MCF 10A (cell line): ENCODE measurements at regions of chr18 and their contacts with region 1.

Region 1: DNA sequence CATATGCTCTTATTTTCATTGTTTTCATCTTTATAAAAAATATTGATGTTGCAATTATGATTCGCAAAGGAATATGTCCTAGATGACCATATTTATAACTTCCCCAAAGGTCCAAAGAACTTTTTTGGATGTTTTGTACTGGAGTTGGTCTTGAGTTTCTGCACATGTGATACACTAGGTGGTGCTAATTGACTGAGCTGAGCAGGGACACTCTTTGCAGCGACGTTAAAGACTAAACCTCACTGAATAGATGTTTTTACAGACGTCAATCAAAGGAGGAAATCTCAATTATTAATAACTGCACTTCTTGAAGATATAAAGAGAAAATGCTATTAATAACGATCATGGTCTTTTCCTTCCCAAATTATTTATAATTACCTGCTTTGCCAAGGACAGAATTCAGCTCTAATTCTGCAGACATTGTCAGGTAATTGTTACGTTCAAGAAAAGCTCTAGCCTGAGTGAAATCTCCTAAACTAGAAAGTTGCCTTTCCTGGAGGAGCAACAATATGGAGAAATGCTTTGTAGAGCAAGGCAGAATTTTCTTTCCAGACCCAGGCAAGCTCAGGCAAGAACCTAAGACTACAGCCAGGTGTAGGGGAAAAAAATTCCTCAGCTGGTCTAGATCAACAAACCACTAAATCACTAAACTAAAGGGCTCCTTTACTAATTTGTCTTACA is 119.3 kb upstream of the RBBP8 start:
- DNase-seq: peak; percentile 73
- H3K4me3 Mint-ChIP-seq: no peak overlapping the region
- H3K27ac Mint-ChIP-seq: peak overlapping the region; percentile 73
- H3K4me1 Mint-ChIP-seq: peaks cover 21% of the 10 kb centered on the region
- H3K27me3 Mint-ChIP-seq: no peaks in the 10 kb centered on the region
- CTCF ChIP-seq: peak; percentile 71

Region 2: GRCh38 chr18:22831441-22831904 is 17.7 kb after region 1 on chr18:
- CTCF ChIA-PET with region 1: interaction called, 9 read pairs
- POLR2A ChIA-PET with region 1: interaction called, 25 read pairs
- intact Hi-C with region 1: no loop called
- DNase-seq: peak; percentile 97
- H3K4me3 Mint-ChIP-seq: no peak overlapping the region
- H3K27ac Mint-ChIP-seq: no peak overlapping the region
- H3K4me1 Mint-ChIP-seq: peaks cover 30% of the 10 kb centered on the region
- H3K27me3 Mint-ChIP-seq: no peaks in the 10 kb centered on the region
- CTCF ChIP-seq: no peak

Region 3: GRCh38 chr18:22846088-22846683 is 32.4 kb after region 1 on chr18:
- CTCF ChIA-PET with region 1: interaction called, 42 read pairs
- POLR2A ChIA-PET with region 1: interaction called, 22 read pairs
- intact Hi-C with region 1: loop called (anchors 5 kb)
- DNase-seq: peak; percentile 54
- H3K4me3 Mint-ChIP-seq: no peak overlapping the region
- H3K27ac Mint-ChIP-seq: peak overlapping the region; percentile 71
- H3K4me1 Mint-ChIP-seq: peaks cover 62% of the 10 kb centered on the region
- H3K27me3 Mint-ChIP-seq: no peaks in the 10 kb centered on the region
- CTCF ChIP-seq: peak; percentile 29

Region 4: GRCh38 chr18:22933206-22933957 is 119.6 kb after region 1 on chr18 and contains the start of gene RBBP8:
- CTCF ChIA-PET with region 1: interaction called, 25 read pairs
- POLR2A ChIA-PET with region 1: interaction called, 16 read pairs
- intact Hi-C with region 1: loop called (anchors 1 kb)
- DNase-seq: peak; percentile 85
- H3K4me3 Mint-ChIP-seq: peak within 1 kb of the TSS; percentile 95
- H3K27ac Mint-ChIP-seq: peak within 1 kb of the TSS; percentile 76
- H3K4me1 Mint-ChIP-seq: peaks cover 18% of the 10 kb centered on the region
- H3K27me3 Mint-ChIP-seq: no peaks in the 10 kb centered on the region
- CTCF ChIP-seq: no peak
- total RNA-seq, gene RBBP8: 42.0 and 59.7 TPM in 2 replicates

Region 5: GRCh38 chr18:22983175-22983574 is 169.4 kb after region 1 on chr18:
- CTCF ChIA-PET with region 1: interaction called, 75 read pairs
- POLR2A ChIA-PET with region 1: interaction called, 23 read pairs
- intact Hi-C with region 1: loop called (anchors 1 kb)
- DNase-seq: peak; percentile 48
- H3K4me3 Mint-ChIP-seq: no peak overlapping the region
- H3K27ac Mint-ChIP-seq: no peak overlapping the region
- H3K4me1 Mint-ChIP-seq: peaks cover 13% of the 10 kb centered on the region
- H3K27me3 Mint-ChIP-seq: no peaks in the 10 kb centered on the region
- CTCF ChIP-seq: peak; percentile 40

Region 6: GRCh38 chr18:23416298-23416697 is 602.5 kb after region 1 on chr18:
- CTCF ChIA-PET with region 1: interaction called, 3 read pairs
- POLR2A ChIA-PET with region 1: no interaction called
- intact Hi-C with region 1: loop called (anchors 5 kb)
- DNase-seq: no peak
- H3K4me3 Mint-ChIP-seq: no peak overlapping the region
- H3K27ac Mint-ChIP-seq: no peak overlapping the region
- H3K4me1 Mint-ChIP-seq: no peaks in the 10 kb centered on the region
- H3K27me3 Mint-ChIP-seq: no peaks in the 10 kb centered on the region
- CTCF ChIP-seq: no peak